Transverse colon (tissue), 4 donors: ENCODE measurements at regions of chr15 and their contacts with region 1.

Region 1: GRCh38 chr15:80776420-80777045 is 2.6 kb upstream of the CEMIP start:
- DNase-seq: peak; percentile 80
- H3K4me3 ChIP-seq: no peak overlapping the region
- H3K27ac ChIP-seq: peak overlapping the region; percentile 23 to 65 (median 57)
- H3K4me1 ChIP-seq: peaks cover 4 to 49% (median 38%) of the 10 kb centered on the region in 4 donors
- H3K27me3 ChIP-seq: peaks cover 37% of the 10 kb centered on the region
- CTCF ChIP-seq: peak; percentile 82 to 91 (median 85)
- EP300 ChIP-seq: no peak
- POLR2A ChIP-seq: no peak

Region 2: DNA sequence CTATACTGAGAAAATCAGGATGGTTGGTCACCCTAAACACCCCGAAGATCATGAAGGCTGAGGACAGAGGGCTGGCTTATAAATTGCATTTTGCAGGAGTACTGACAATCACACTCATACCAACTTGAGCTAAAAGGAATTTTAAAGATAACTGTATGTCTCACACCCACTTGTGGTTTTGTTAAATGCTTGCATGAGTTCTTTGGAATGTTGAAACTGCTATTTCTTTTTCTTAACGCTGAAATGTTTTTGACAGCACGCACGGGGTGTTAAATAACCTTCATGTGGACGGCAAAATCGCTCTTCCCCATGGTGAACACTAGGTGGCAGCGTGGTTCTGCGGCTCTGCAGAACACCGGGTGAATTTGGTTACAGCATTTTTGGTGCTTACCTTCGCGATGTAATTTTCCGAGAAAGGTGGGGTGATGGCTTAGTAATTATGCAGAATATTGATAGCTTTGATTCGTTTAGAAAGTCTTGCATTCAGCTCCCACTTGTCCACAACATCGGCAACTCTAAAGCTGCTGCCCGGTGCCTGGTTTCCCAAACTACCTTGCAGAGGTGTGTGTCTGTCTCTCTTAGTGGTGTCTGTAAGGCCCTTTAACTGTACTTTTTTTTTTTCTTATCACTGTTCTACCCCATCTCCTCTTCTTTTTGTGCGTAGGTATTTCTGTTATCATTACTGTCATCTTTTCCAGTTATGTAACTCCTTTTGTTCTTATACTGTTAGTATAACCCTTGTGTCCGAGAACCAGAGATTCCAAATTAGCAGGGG is 320.7 kb before region 1 on chr15:
- in situ Hi-C with region 1: loop called (anchors 10 to 25 kb)
- intact Hi-C with region 1: loop called (anchors 5 kb)
- DNase-seq: peak; percentile 42
- H3K4me3 ChIP-seq: no peak overlapping the region
- H3K27ac ChIP-seq: no peak overlapping the region
- H3K4me1 ChIP-seq: peaks cover 0 to 5% (median 0%) of the 10 kb centered on the region in 4 donors
- H3K27me3 ChIP-seq: no peaks in the 10 kb centered on the region
- CTCF ChIP-seq: peak; percentile 85 to 94 (median 89)
- EP300 ChIP-seq: no peak
- POLR2A ChIP-seq: no peak

Region 3: GRCh38 chr15:80567721-80568157 is 208.8 kb before region 1 on chr15:
- in situ Hi-C with region 1: loop called (anchors 5 to 10 kb)
- intact Hi-C with region 1: loop called (anchors 1 kb)
- DNase-seq: peak; percentile 54
- H3K4me3 ChIP-seq: no peak overlapping the region
- H3K27ac ChIP-seq: no peak overlapping the region
- H3K4me1 ChIP-seq: peaks cover 0 to 4% (median 0%) of the 10 kb centered on the region in 4 donors
- H3K27me3 ChIP-seq: no peaks in the 10 kb centered on the region
- CTCF ChIP-seq: peak; percentile 61 to 83 (median 69)
- EP300 ChIP-seq: no peak
- POLR2A ChIP-seq: no peak

Region 4: GRCh38 chr15:80709561-80709960 is 67.0 kb before region 1 on chr15:
- in situ Hi-C with region 1: no loop called
- intact Hi-C with region 1: loop called (anchors 5 kb)
- DNase-seq: peak; percentile 81
- H3K4me3 ChIP-seq: no peak overlapping the region
- H3K27ac ChIP-seq: peak overlapping the region; percentile 65 to 79 (median 70)
- H3K4me1 ChIP-seq: peaks cover 5 to 63% (median 15%) of the 10 kb centered on the region in 4 donors
- H3K27me3 ChIP-seq: no peaks in the 10 kb centered on the region
- CTCF ChIP-seq: no peak
- EP300 ChIP-seq: no peak
- POLR2A ChIP-seq: no peak